ENCODE measurements at regions of chr2 and their contacts with region 1.

Region 1: GRCh38 chr2:60998628-60999545 is 18.6 kb upstream of the PEX13 start:
- DNase-seq: peak; percentile 55 to 79
- ATAC-seq: peak; percentile 90 to 93 (median 91)
- H3K4me3 ChIP-seq: no peak overlapping the region
- H3K4me3 Mint-ChIP-seq: no peak overlapping the region
- H3K27ac ChIP-seq: no peak overlapping the region
- H3K27ac Mint-ChIP-seq: peak overlapping the region; percentile 24 to 48
- H3K4me1 ChIP-seq: no peaks in the 10 kb centered on the region
- H3K4me1 Mint-ChIP-seq: peaks cover 6 to 9% of the 10 kb centered on the region in 2 donors
- H3K27me3 ChIP-seq: no peaks in the 10 kb centered on the region
- H3K27me3 Mint-ChIP-seq: no peaks in the 10 kb centered on the region
- CTCF ChIP-seq: peak; percentile 86

Region 2: DNA sequence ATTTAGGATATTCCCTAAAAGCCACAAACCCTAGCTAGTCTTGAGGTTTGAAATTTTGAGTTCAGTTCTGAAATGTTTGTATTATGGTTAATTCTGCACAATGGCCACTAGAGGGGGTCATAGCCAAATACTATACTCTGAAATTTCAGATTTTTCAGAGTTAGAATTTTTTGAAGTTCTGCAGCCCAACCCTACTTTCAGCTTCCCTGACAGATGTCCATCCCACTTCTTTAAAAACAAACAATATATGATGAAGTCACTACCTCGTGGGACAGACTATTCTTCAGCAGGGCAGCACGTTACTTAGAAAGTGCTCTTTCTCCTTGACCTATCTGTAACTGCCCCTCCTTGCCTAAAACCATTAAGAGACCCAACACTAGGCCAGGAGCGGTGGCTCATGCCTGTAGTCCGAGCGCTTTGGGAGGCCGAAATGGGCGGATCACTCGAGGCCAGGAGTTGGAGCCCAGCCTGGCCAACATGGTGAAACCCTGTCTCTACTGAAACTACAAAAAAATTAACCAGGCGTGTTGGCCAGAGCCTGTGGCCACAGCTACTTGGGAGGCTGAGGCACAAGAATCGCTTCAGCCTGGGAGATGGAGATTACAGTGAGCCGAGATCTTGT is 291.0 kb before region 1 on chr2:
- intact Hi-C with region 1: loop called (anchors 1 kb)
- DNase-seq: peak in 1 of 2 donors; percentile 67
- ATAC-seq: peak; percentile 68 to 75 (median 74)
- H3K4me3 ChIP-seq: no peak overlapping the region
- H3K4me3 Mint-ChIP-seq: no peak overlapping the region
- H3K27ac ChIP-seq: no peak overlapping the region
- H3K27ac Mint-ChIP-seq: no peak overlapping the region
- H3K4me1 ChIP-seq: no peaks in the 10 kb centered on the region
- H3K4me1 Mint-ChIP-seq: peaks cover 5 to 8% of the 10 kb centered on the region in 2 donors
- H3K27me3 ChIP-seq: no peaks in the 10 kb centered on the region
- H3K27me3 Mint-ChIP-seq: peaks cover 4 to 14% of the 10 kb centered on the region in 2 donors
- CTCF ChIP-seq: peak; percentile 80

Region 3: GRCh38 chr2:60794277-60794863 is 204.5 kb before region 1 on chr2:
- intact Hi-C with region 1: loop called (anchors 1 kb)
- DNase-seq: peak in 1 of 2 donors; percentile 62
- ATAC-seq: peak in 2 of 3 donors; percentile 58 to 65
- H3K4me3 ChIP-seq: no peak overlapping the region
- H3K4me3 Mint-ChIP-seq: no peak overlapping the region
- H3K27ac ChIP-seq: no peak overlapping the region
- H3K27ac Mint-ChIP-seq: peak overlapping the region in 1 of 2 donors; percentile 56
- H3K4me1 ChIP-seq: peaks cover 6% of the 10 kb centered on the region
- H3K4me1 Mint-ChIP-seq: peaks cover 16 to 20% of the 10 kb centered on the region in 2 donors
- H3K27me3 ChIP-seq: no peaks in the 10 kb centered on the region
- H3K27me3 Mint-ChIP-seq: no peaks in the 10 kb centered on the region
- CTCF ChIP-seq: peak; percentile 86

Measured in natural killer cell (primary cell).